ENCODE measurements at regions of chr12 and their contacts with region 1.

Region 1: DNA sequence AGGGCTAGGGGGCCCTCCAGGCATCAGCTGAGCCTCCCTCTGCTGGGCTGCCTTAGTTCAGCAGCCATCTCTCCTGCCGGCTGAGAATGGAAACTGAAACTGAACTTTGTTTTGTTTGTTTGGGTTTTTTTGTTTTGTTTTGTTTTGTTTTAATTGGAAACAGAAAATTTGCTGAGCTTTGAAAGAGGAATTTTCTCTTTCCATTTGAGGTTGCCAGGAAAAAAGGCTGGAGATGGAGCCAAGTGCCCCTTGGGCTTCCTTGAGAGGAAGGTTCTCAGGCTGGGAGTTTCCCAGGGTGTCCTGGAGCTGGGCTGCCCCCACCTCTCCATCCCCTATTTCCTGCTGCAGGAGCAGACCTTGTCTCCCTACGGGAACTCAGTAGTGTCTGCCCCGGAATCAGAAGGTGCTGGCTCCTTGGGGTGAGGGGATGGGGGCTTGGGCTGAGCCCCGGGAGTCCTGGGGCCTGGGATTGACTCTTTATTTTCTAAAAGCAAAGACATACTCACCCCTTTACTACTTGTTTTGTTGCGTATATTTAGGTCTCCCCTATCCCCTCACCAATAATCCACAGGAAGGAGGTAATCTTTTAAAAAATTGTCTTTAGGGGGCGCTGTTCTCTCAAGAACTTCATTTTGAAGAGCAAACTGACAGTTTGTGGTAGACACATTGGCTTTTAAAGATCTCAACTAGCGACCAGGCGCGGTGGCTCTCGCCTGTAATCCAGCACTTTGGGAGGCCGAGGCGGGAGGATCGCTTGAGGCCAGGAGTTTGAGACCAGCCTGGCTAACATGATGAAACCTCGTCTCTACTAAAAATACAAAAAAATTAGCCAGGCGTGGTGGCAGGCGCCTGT is 21.3 kb upstream of the OASL start:
- DNase-seq: peak in 1 of 2 experiments; percentile 54
- H3K4me3 ChIP-seq: no peak overlapping the region; the same call in 1 of the 2 replicates
- H3K27ac ChIP-seq: no peak overlapping the region
- H3K4me1 ChIP-seq: 0 out of 2 replicates have a peak, but pooled peaks cover 3% of the 10 kb centered on the region
- H3K27me3 ChIP-seq: no peaks in the 10 kb centered on the region
- CTCF ChIP-seq: peak; percentile 75

Region 2: DNA sequence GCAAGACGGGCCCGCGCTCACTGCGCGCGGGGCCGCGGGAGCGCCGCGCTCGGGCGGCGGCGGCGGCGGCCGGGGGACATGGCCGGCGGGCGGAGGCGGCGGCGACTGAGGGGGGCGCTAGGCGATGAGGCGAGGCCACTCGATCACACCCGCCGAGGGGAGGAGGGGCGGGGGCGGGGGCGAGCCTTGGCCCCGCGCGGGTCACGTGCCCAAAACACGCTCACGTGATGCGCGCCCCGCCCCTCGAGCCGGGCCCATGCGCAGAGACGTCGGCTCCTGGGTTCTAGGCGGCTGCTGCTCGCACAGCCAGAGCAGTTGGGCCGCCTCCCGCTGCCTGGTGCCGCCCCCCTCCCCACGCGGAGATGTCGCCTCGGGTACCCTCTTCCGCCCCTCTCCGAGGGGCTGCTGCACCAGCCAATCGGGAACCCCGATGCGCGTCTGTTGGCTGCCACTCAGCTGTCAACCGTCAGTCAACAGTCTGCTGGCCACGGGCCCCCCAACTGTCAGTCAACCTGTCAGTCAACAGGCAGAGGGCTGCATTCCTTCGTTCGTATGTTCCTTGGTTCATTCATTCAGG is 156.1 kb before region 1 on chr12 and contains the start of gene SPPL3:
- CTCF ChIA-PET with region 1: no interaction called
- POLR2A ChIA-PET with region 1: no interaction called
- intact Hi-C with region 1: no loop called
- DNase-seq: peak; percentile 58 to 89
- H3K4me3 ChIP-seq: peak within 1 kb of the TSS; percentile 93
- H3K27ac ChIP-seq: no peak within 1 kb of the TSS
- H3K4me1 ChIP-seq: peaks cover 25% of the 10 kb centered on the region
- H3K27me3 ChIP-seq: no peaks in the 10 kb centered on the region
- CTCF ChIP-seq: no peak
- total RNA-seq, gene SPPL3: 27.1 and 44.7 TPM in 2 replicates

Region 3: DNA sequence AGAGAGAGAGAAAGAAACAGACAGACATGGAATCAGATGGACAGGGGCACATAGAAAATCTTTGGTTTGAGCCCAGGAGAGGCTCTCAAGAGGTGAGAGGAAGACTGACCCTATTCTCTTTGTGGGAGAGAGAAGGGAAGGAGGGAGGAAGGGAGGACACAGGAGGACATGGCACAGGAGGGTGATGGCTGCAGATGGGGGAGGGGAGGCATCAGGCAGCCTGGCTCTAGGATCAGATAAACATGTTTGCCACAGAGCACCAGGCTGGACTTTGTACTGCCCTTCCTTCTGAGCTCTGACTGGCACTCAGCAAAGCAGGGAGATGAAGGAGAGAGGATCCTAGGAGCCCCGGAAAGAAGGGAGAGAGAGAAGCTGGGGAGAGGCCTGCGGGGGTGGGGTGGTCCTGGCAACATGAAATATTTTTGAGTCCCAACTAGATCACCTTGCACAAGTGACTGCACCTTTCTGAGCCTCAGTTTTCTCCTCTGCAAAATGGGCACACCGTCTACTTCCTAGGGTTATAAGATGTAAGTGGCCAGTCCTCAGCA is 76.0 kb before region 1 on chr12:
- CTCF ChIA-PET with region 1: no interaction called
- POLR2A ChIA-PET with region 1: no interaction called
- intact Hi-C with region 1: no loop called
- DNase-seq: no peak
- H3K4me3 ChIP-seq: no peak overlapping the region
- H3K27ac ChIP-seq: no peak overlapping the region
- H3K4me1 ChIP-seq: no peaks in the 10 kb centered on the region
- H3K27me3 ChIP-seq: peaks cover 3% of the 10 kb centered on the region; the same call in 1 of the 2 replicates
- CTCF ChIP-seq: no peak

Region 4: GRCh38 chr12:121005346-121005815 is 55.0 kb before region 1 on chr12:
- CTCF ChIA-PET with region 1: interaction called, 4 read pairs
- POLR2A ChIA-PET with region 1: no interaction called
- intact Hi-C with region 1: loop called (anchors 2 kb)
- DNase-seq: peak; percentile 58 to 60
- H3K4me3 ChIP-seq: no peak overlapping the region
- H3K27ac ChIP-seq: no peak overlapping the region
- H3K4me1 ChIP-seq: no peaks in the 10 kb centered on the region
- H3K27me3 ChIP-seq: no peaks in the 10 kb centered on the region
- CTCF ChIP-seq: peak; percentile 75

Region 5: DNA sequence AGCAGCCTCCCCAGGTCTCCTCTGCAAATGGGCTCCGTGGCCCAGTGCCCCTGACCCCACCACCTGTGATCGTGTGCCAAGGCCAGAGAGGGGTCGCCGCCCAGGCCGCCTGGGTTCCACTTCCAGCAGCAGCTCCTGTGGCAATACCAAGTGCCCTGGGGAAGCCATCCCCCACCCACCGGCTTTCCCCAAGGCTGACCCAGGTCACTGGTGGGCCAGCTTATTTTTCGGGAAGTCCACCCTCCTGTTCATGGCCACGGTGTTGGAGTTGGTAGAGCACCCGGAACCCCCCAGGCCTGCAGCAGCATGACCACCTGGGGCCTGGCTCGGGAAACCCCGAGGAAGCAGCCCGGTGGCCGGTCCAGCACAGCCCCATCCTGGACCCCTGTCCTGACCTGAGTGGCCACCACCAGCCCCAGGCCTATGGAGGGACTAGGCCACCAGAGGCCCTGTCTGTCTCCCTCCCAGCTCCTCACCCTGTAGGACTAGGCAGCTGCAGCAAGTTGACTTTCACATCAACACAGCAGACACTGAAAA is 19.4 kb after region 1 on chr12:
- CTCF ChIA-PET with region 1: interaction called, 11 read pairs
- POLR2A ChIA-PET with region 1: no interaction called
- intact Hi-C with region 1: no loop called
- DNase-seq: no peak
- H3K4me3 ChIP-seq: no peak overlapping the region
- H3K27ac ChIP-seq: no peak overlapping the region
- H3K4me1 ChIP-seq: no peaks in the 10 kb centered on the region
- H3K27me3 ChIP-seq: no peaks in the 10 kb centered on the region
- CTCF ChIP-seq: no peak

Region 6: GRCh38 chr12:121110211-121110940 is 50.0 kb after region 1 on chr12:
- CTCF ChIA-PET with region 1: no interaction called
- POLR2A ChIA-PET with region 1: no interaction called
- intact Hi-C with region 1: loop called (anchors 2 kb)
- DNase-seq: peak; percentile 38 to 52
- H3K4me3 ChIP-seq: no peak overlapping the region
- H3K27ac ChIP-seq: no peak overlapping the region
- H3K4me1 ChIP-seq: peaks cover 7% of the 10 kb centered on the region
- H3K27me3 ChIP-seq: no peaks in the 10 kb centered on the region
- CTCF ChIP-seq: peak; percentile 97

Region 7: DNA sequence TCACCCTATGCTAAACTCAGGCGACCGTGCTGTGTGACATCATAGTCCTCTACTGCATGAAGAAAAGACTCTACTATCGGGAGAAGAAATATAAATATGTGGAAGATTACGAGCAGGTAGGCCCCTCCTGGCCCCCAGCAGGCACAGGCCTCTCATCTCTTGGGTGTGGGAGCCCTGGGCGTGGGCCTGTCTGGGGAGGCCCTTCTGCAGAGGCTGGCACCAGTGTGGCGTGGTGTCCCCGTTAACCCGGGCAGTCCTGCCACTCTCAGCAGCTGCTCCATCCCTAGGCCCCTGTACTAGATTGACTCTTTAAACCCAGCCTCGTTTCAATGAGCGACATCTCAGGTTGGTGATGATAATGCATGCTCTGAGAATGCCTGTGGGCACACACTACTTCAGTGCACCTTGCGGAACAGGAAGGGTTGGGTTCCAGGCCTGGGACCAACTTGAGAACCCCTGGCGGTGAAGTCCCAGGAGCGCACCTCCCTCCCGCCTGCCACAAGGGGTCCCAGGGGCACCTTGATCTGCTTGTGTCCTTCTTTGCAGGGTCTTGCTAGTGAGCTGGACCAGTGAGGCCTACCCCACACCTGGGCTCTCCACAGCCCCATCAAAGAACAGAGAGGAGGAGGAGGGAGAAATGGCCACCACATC is 172.7 kb after region 1 on chr12:
- CTCF ChIA-PET with region 1: interaction called, 3 read pairs
- POLR2A ChIA-PET with region 1: no interaction called
- intact Hi-C with region 1: loop called (anchors 1 kb)
- DNase-seq: no peak
- H3K4me3 ChIP-seq: no peak overlapping the region
- H3K27ac ChIP-seq: no peak overlapping the region
- H3K4me1 ChIP-seq: peaks cover 24% of the 10 kb centered on the region
- H3K27me3 ChIP-seq: no peaks in the 10 kb centered on the region
- CTCF ChIP-seq: no peak

Region 8: DNA sequence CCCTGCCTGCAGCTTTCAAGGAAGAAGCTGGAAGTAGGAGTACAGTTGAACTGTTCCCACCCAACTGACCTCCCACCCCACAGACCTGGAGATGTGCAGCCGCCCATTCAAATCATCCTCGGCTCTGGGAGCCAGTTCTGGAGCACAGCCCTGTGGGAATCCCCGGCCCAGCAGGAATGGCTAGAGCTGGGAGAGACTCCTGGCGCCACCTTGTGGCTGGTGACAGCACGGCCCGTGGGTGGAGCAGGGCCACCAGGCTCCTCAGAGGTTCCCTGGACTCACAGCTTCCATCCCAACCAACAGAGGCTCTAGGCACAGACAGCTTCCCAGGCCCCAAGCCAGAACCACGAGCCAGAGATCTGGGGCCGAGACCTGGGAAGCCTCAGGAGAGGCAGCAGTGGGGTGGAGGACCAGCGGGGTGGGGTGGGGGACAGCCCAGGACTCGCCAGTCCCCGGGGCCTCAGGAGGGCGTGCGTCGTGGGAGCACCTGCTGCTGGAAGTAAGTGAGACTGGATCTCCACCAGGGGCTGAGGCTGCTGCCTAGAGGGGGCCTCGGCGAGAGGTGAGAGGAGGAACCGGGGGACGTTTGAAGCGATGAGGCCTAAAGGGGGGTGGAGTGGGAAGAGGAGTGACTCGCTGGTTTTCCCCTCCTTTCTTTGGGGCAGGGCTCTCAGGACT is 383.0 kb after region 1 on chr12:
- CTCF ChIA-PET with region 1: interaction called, 6 read pairs
- POLR2A ChIA-PET with region 1: no interaction called
- intact Hi-C with region 1: loop called (anchors 1 kb)
- DNase-seq: peak; percentile 42 to 79
- H3K4me3 ChIP-seq: no peak overlapping the region
- H3K27ac ChIP-seq: no peak overlapping the region
- H3K4me1 ChIP-seq: no peaks in the 10 kb centered on the region
- H3K27me3 ChIP-seq: no peaks in the 10 kb centered on the region
- CTCF ChIP-seq: peak; percentile 88

Region 9: GRCh38 chr12:121688966-121689365 is 628.6 kb after region 1 on chr12:
- CTCF ChIA-PET with region 1: no interaction called
- POLR2A ChIA-PET with region 1: no interaction called
- intact Hi-C with region 1: loop called (anchors 10 kb)
- DNase-seq: no peak
- H3K4me3 ChIP-seq: no peak overlapping the region
- H3K27ac ChIP-seq: no peak overlapping the region
- H3K4me1 ChIP-seq: peaks cover 4% of the 10 kb centered on the region; the same call in 1 of the 2 replicates
- H3K27me3 ChIP-seq: no peaks in the 10 kb centered on the region
- CTCF ChIP-seq: no peak